Activated CD8-positive, alpha-beta T cell treated with anti-CD3 and anti-CD28 coated beads for 36 hours (primary cell): ENCODE measurements at regions of chrX and their contacts with region 1.

Region 1: GRCh38 chrX:37745354-37745753 is 34.5 kb upstream of the CYBB start:
- DNase-seq: peak; percentile 82
- ATAC-seq: peak; percentile 41
- H3K4me3 Mint-ChIP-seq: no peak overlapping the region
- H3K27ac Mint-ChIP-seq: peak overlapping the region; percentile 85
- H3K4me1 Mint-ChIP-seq: peaks cover 16% of the 10 kb centered on the region
- H3K27me3 Mint-ChIP-seq: no peaks in the 10 kb centered on the region
- CTCF ChIP-seq: peak; percentile 67

Region 2: DNA sequence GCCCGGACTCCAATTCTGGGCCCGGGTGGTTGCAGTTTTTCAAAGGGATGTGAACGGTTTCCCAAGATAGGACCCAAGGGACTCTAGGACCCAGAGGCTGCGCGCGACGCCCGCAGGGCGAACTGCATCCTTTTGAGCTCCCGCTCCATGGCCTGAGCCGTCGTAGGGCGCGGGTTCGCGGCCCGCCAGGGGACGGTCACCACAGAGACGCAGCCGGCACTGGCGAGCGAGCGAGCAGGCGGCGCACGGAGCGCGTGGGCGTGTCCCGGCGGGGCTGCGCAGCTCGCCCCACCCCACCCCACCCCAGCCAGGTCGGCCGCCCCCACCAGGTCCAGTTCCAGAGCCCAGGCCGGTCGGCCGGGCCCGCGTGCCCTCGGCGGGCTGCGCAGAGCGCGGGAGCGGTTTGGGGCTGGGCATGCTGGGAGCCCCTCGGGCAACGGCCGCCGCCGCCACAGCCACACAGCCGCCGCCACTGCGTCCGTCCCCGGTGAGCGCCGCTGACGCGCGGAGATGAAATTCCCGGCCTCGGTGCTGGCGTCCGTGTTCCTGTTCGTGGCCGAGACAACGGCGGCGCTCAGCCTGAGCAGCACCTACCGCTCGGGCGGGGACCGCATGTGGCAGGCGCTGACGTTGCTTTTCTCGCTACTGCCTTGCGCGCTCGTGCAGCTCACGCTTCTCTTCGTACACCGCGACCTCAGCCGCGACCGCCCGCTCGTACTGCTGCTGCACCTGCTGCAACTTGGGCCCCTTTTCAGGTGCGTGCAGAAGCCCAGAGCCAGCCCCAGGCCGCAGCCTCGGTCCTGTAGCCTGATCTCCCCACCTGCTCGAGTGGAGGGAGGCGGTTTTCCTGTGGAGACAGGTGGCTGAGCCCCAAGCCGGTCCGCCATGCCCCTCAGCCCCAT is 59.7 kb before region 1 on chrX and contains the start of gene XK:
- CTCF ChIA-PET with region 1: no interaction called
- POLR2A ChIA-PET with region 1: no interaction called
- intact Hi-C with region 1: no loop called
- DNase-seq: peak; percentile 58
- ATAC-seq: peak; percentile 82
- H3K4me3 Mint-ChIP-seq: peak within 1 kb of the TSS; percentile 57
- H3K27ac Mint-ChIP-seq: no peak within 1 kb of the TSS
- H3K4me1 Mint-ChIP-seq: no peaks in the 10 kb centered on the region
- H3K27me3 Mint-ChIP-seq: peaks cover 4% of the 10 kb centered on the region
- CTCF ChIP-seq: no peak
- total RNA-seq, gene XK: 0.07 TPM in 1 of 2 experiments, not detected in the other

Region 3: GRCh38 chrX:37818031-37818430 is 72.7 kb after region 1 on chrX:
- CTCF ChIA-PET with region 1: interaction called, 165 read pairs
- POLR2A ChIA-PET with region 1: no interaction called
- intact Hi-C with region 1: no loop called
- DNase-seq: no peak
- ATAC-seq: no peak
- H3K4me3 Mint-ChIP-seq: no peak overlapping the region
- H3K27ac Mint-ChIP-seq: no peak overlapping the region
- H3K4me1 Mint-ChIP-seq: no peaks in the 10 kb centered on the region
- H3K27me3 Mint-ChIP-seq: no peaks in the 10 kb centered on the region
- CTCF ChIP-seq: no peak

Region 4: GRCh38 chrX:37840931-37841330 is 95.6 kb after region 1 on chrX:
- CTCF ChIA-PET with region 1: interaction called, 16 read pairs
- POLR2A ChIA-PET with region 1: no interaction called
- intact Hi-C with region 1: no loop called
- DNase-seq: no peak
- ATAC-seq: no peak
- H3K4me3 Mint-ChIP-seq: no peak overlapping the region
- H3K27ac Mint-ChIP-seq: peak overlapping the region; percentile 20
- H3K4me1 Mint-ChIP-seq: peaks cover 12% of the 10 kb centered on the region
- H3K27me3 Mint-ChIP-seq: no peaks in the 10 kb centered on the region
- CTCF ChIP-seq: no peak

Region 5: GRCh38 chrX:37961118-37961517 is 215.8 kb after region 1 on chrX:
- CTCF ChIA-PET with region 1: no interaction called
- POLR2A ChIA-PET with region 1: no interaction called
- intact Hi-C with region 1: no loop called
- DNase-seq: no peak
- ATAC-seq: no peak
- H3K4me3 Mint-ChIP-seq: no peak overlapping the region
- H3K27ac Mint-ChIP-seq: no peak overlapping the region
- H3K4me1 Mint-ChIP-seq: peaks cover 2% of the 10 kb centered on the region
- H3K27me3 Mint-ChIP-seq: no peaks in the 10 kb centered on the region
- CTCF ChIP-seq: no peak